CD4-positive, alpha-beta T cell (primary cell): ENCODE measurements at regions of chr17 and their contacts with region 1.

Region 1: GRCh38 chr17:72381597-72382397 is 261.0 kb downstream of the SOX9 start:
- DNase-seq: no peak
- ATAC-seq: no peak
- H3K4me3 ChIP-seq: no peak overlapping the region
- H3K4me3 Mint-ChIP-seq: no peak overlapping the region
- H3K27ac ChIP-seq: no peak overlapping the region
- H3K27ac Mint-ChIP-seq: no peak overlapping the region
- H3K4me1 ChIP-seq: no peaks in the 10 kb centered on the region
- H3K4me1 Mint-ChIP-seq: no peaks in the 10 kb centered on the region
- H3K27me3 ChIP-seq: peaks cover 0 to 3% of the 10 kb centered on the region in 2 experiments
- H3K27me3 Mint-ChIP-seq: peaks cover 15% of the 10 kb centered on the region
- CTCF ChIP-seq: no peak

Region 2: DNA sequence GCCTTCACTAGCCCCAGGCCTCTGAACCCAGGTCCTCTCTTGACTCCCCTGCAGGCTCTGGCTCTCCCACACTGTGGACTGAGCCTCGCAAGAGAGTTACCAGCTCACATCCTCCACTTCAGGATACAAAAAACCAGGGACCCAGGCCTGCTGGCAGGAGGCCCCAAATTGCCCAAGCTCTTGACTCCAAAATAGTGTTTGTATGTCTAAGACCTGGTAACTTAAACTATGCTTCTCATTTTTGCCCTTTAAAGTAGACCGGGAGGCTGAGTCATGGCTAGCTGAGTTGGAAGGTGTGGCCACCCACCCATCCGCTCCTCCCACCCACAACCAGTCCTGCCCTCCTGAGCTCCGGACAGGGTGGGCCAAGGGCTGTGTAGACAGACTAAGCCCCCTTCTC is 11.0 kb before region 1 on chr17:
- CTCF ChIA-PET with region 1: no interaction called
- POLR2A ChIA-PET with region 1: no interaction called
- intact Hi-C with region 1: loop called in 1 of 2 experiments (anchors 1 kb)
- DNase-seq: no peak
- ATAC-seq: no peak
- H3K4me3 ChIP-seq: no peak overlapping the region
- H3K4me3 Mint-ChIP-seq: no peak overlapping the region
- H3K27ac ChIP-seq: no peak overlapping the region
- H3K27ac Mint-ChIP-seq: no peak overlapping the region
- H3K4me1 ChIP-seq: no peaks in the 10 kb centered on the region
- H3K4me1 Mint-ChIP-seq: no peaks in the 10 kb centered on the region
- H3K27me3 ChIP-seq: no peaks in the 10 kb centered on the region
- H3K27me3 Mint-ChIP-seq: no peaks in the 10 kb centered on the region
- CTCF ChIP-seq: no peak

Region 3: GRCh38 chr17:72556944-72557826 is 175.4 kb after region 1 on chr17:
- CTCF ChIA-PET with region 1: no interaction called
- POLR2A ChIA-PET with region 1: no interaction called
- intact Hi-C with region 1: no loop called
- DNase-seq: peak; percentile 30 to 71 (median 44)
- ATAC-seq: peak; percentile 39
- H3K4me3 ChIP-seq: no peak overlapping the region
- H3K4me3 Mint-ChIP-seq: no peak overlapping the region
- H3K27ac ChIP-seq: no peak overlapping the region
- H3K27ac Mint-ChIP-seq: no peak overlapping the region
- H3K4me1 ChIP-seq: peaks cover 3% of the 10 kb centered on the region
- H3K4me1 Mint-ChIP-seq: no peaks in the 10 kb centered on the region
- H3K27me3 ChIP-seq: no peaks in the 10 kb centered on the region
- H3K27me3 Mint-ChIP-seq: no peaks in the 10 kb centered on the region
- CTCF ChIP-seq: peak; percentile 76